Motor neuron (in vitro differentiated cells): ENCODE measurements at regions of chr1 and their contacts with region 1.

Region 1: GRCh38 chr1:41573785-41574713 is 89.6 kb upstream of the EDN2 start:
- ATAC-seq: peak; percentile 95 to 100 (median 99)
- H3K4me3 ChIP-seq: no peak overlapping the region
- H3K27ac ChIP-seq: no peak overlapping the region
- H3K4me1 ChIP-seq: peaks cover 0 to 5% of the 10 kb centered on the region in 2 donors

Region 2: DNA sequence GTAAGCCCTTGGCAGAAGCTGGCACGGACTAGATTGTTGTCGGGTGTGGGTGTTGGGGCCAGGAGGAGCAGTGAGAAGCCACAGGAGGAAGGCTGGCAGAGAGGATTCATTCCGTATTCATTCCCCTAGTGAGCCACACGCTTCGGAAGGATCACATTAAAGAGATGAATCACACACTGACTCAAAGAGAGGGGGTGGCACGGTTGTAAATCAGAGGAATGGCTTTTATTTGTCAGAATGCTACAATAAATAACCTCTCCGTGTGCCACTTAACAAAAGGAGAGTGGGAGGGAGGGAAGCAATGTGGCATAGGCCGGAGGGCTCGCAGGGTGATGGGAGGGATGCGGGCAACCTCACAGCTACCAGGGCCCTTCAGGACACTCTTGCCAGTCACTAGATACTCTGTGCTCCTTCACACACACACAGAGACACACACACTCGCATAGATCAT is 209.2 kb after region 1 on chr1:
- in situ Hi-C with region 1: loop called in 1 of 9 experiments (anchors 25 kb)
- ATAC-seq: peak; percentile 43 to 99 (median 96)
- H3K4me3 ChIP-seq: no peak overlapping the region
- H3K27ac ChIP-seq: no peak overlapping the region
- H3K4me1 ChIP-seq: peaks cover 17 to 20% of the 10 kb centered on the region in 2 donors

Region 3: DNA sequence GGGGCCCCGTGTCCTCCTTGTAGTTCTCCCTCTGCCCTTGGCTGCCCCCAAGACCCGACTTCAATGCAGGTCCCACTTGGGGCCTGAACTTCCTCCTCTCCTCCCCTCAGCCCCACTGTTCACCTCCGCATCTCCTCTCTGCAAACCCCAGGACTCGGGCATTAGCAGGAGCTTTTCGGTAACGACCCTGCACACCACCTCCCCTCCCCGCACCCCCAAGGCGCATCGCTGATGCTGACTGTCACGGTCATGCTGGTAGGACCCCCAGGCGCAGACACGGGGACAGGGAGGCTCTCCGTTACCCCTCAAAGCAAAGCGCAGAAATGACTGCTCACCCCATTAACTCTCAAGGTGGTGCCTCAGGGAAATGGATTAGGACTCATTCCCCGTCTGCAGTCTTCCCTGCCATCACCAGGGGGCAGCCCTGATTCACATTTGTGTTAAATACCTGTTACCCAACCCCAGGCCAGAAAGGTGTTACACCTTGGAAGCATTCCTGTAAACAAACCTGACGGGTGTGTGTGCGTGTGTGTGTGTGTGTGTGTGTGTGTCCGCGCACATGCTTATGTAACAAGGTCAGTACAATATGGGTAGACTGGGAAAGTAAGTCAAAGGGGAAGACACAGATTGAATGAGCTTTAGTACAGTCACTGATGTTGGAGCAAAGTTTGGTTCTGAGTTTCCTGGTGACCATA is 572.7 kb after region 1 on chr1:
- in situ Hi-C with region 1: loop called in 4 of 9 experiments (anchors 25 kb)
- ATAC-seq: peak; percentile 35 to 88 (median 56)
- H3K4me3 ChIP-seq: no peak overlapping the region
- H3K27ac ChIP-seq: no peak overlapping the region
- H3K4me1 ChIP-seq: no peaks in the 10 kb centered on the region

Region 4: GRCh38 chr1:42173155-42173933 is 599.3 kb after region 1 on chr1:
- in situ Hi-C with region 1: loop called in 2 of 9 experiments (anchors 25 kb)
- ATAC-seq: peak; percentile 33 to 69 (median 62)
- H3K4me3 ChIP-seq: no peak overlapping the region
- H3K27ac ChIP-seq: no peak overlapping the region
- H3K4me1 ChIP-seq: peaks cover 4 to 11% of the 10 kb centered on the region in 2 donors